GM12878 (cell line): ENCODE measurements at regions of chr6 and their contacts with region 1.

Region 1: GRCh38 chr6:130282234-130282995 is 59.7 kb upstream of the SAMD3 start:
- DNase-seq: no peak
- ATAC-seq: peak; percentile 96
- H3K4me3 ChIP-seq: no peak overlapping the region
- H3K27ac ChIP-seq: no peak overlapping the region
- H3K4me1 ChIP-seq: no peaks in the 10 kb centered on the region
- H3K27me3 ChIP-seq: no peaks in the 10 kb centered on the region
- CTCF ChIP-seq: peak; percentile 43 to 59 (median 51); a peak in 5 of 6 replicates
- EP300 ChIP-seq: no peak
- POLR2A ChIP-seq: no peak
- RAD21 ChIP-seq: peak; percentile 67

Region 2: GRCh38 chr6:129416337-129416990 is 866.0 kb before region 1 on chr6:
- CTCF ChIA-PET with region 1: no interaction called
- POLR2A ChIA-PET with region 1: no interaction called
- RAD21 ChIA-PET with region 1: no interaction called
- SMC1A ChIA-PET with region 1: no interaction called
- in situ Hi-C with region 1: no loop called
- intact Hi-C with region 1: no loop called
- DNase-seq: no peak
- ATAC-seq: no peak; the same call in 2 of the 3 replicates
- H3K4me3 ChIP-seq: no peak overlapping the region
- H3K27ac ChIP-seq: no peak overlapping the region
- H3K4me1 ChIP-seq: no peaks in the 10 kb centered on the region
- H3K27me3 ChIP-seq: no peaks in the 10 kb centered on the region; a peak in 2 of 4 replicates
- CTCF ChIP-seq: no peak
- EP300 ChIP-seq: no peak
- POLR2A ChIP-seq: no peak
- RAD21 ChIP-seq: no peak

Region 3: DNA sequence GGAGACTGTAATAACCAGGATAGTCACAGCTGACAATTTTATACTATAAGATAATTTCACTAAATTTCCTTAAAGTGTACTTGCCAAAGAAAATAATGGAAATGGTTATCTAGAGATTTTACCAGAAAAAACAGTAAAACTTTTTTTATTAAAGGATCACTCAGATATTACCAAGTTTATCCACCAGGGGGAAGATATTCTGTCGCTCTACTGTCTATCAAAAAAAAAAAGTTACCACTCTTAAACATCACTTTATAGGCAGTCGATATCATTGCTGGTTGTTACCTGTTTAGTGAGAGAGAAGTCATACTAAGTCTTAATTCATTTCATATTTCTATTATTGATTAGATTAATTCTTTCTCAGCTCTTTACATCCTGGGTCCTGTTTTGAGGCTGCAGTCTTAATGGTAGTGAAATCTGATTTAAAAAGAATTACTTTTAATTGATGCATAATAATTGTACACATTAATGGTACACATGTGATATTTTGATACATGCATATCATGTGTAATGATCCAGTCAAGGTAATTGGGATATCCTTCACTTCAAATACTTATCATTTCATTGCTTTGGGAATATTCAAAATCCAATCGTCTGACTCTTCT is 245.1 kb before region 1 on chr6:
- CTCF ChIA-PET with region 1: interaction called, 4 read pairs
- POLR2A ChIA-PET with region 1: no interaction called
- RAD21 ChIA-PET with region 1: interaction called, 3 read pairs
- SMC1A ChIA-PET with region 1: interaction called, 3 read pairs
- in situ Hi-C with region 1: no loop called
- intact Hi-C with region 1: loop called (anchors 5 kb)
- DNase-seq: no peak
- ATAC-seq: peak; percentile 61
- H3K4me3 ChIP-seq: no peak overlapping the region
- H3K27ac ChIP-seq: no peak overlapping the region
- H3K4me1 ChIP-seq: peaks cover 3% of the 10 kb centered on the region
- H3K27me3 ChIP-seq: no peaks in the 10 kb centered on the region
- CTCF ChIP-seq: peak in 2 of 3 experiments; percentile 31 to 39; a peak in 4 of 6 replicates
- EP300 ChIP-seq: no peak
- POLR2A ChIP-seq: no peak
- RAD21 ChIP-seq: no peak

Region 4: GRCh38 chr6:130076512-130076911 is 205.9 kb before region 1 on chr6:
- CTCF ChIA-PET with region 1: interaction called, 26 read pairs
- POLR2A ChIA-PET with region 1: no interaction called
- RAD21 ChIA-PET with region 1: interaction called, 8 read pairs
- SMC1A ChIA-PET with region 1: interaction called, 15 read pairs
- in situ Hi-C with region 1: no loop called
- intact Hi-C with region 1: loop called (anchors 1 kb)
- DNase-seq: no peak
- ATAC-seq: no peak; the same call in 2 of the 3 replicates
- H3K4me3 ChIP-seq: no peak overlapping the region
- H3K27ac ChIP-seq: no peak overlapping the region
- H3K4me1 ChIP-seq: no peaks in the 10 kb centered on the region
- H3K27me3 ChIP-seq: no peaks in the 10 kb centered on the region
- CTCF ChIP-seq: peak in 2 of 3 experiments; percentile 4 to 38; a peak in 1 of 6 replicates
- EP300 ChIP-seq: no peak
- POLR2A ChIP-seq: no peak
- RAD21 ChIP-seq: peak; percentile 64

Region 5: DNA sequence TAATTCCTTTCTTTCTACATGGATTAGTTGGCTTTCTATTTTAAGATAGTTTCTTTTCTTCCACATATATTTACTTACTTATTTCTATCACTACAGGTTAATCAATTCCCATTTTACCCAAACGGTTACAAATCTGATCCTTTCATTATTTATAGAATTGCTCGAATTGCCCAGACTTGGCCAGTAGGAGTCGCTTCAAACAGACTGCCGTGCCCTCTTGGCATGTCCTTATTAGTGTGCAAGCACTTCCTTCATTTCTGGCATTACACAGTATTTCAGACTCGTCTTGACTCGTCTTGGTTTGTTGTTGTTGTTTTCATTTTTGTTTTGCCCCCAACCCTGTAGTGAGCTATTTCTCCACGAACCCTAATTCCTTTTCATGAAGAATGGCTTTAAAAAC is 134.2 kb before region 1 on chr6:
- CTCF ChIA-PET with region 1: interaction called, 13 read pairs
- POLR2A ChIA-PET with region 1: no interaction called
- RAD21 ChIA-PET with region 1: no interaction called
- SMC1A ChIA-PET with region 1: interaction called, 3 read pairs
- in situ Hi-C with region 1: no loop called
- intact Hi-C with region 1: no loop called
- DNase-seq: no peak
- ATAC-seq: peak; percentile 91
- H3K4me3 ChIP-seq: no peak overlapping the region
- H3K27ac ChIP-seq: no peak overlapping the region
- H3K4me1 ChIP-seq: no peaks in the 10 kb centered on the region
- H3K27me3 ChIP-seq: no peaks in the 10 kb centered on the region
- CTCF ChIP-seq: peak; percentile 25 to 52 (median 46)
- EP300 ChIP-seq: no peak
- POLR2A ChIP-seq: no peak
- RAD21 ChIP-seq: 0 out of 2 replicates have a peak, but pooled peaks have one; percentile 17

Region 6: GRCh38 chr6:130240232-130240631 is 42.2 kb before region 1 on chr6:
- CTCF ChIA-PET with region 1: interaction called, 10 read pairs
- POLR2A ChIA-PET with region 1: no interaction called
- RAD21 ChIA-PET with region 1: no interaction called
- SMC1A ChIA-PET with region 1: interaction called, 5 read pairs
- in situ Hi-C with region 1: no loop called
- intact Hi-C with region 1: loop called (anchors 2 kb)
- DNase-seq: no peak
- ATAC-seq: no peak
- H3K4me3 ChIP-seq: no peak overlapping the region
- H3K27ac ChIP-seq: no peak overlapping the region
- H3K4me1 ChIP-seq: no peaks in the 10 kb centered on the region
- H3K27me3 ChIP-seq: no peaks in the 10 kb centered on the region
- CTCF ChIP-seq: no peak
- EP300 ChIP-seq: no peak
- POLR2A ChIP-seq: no peak
- RAD21 ChIP-seq: no peak

Region 7: GRCh38 chr6:130293800-130294199 is 11.4 kb after region 1 on chr6:
- CTCF ChIA-PET with region 1: interaction called, 9 read pairs
- POLR2A ChIA-PET with region 1: interaction called, 4 read pairs
- RAD21 ChIA-PET with region 1: interaction called, 5 read pairs
- SMC1A ChIA-PET with region 1: interaction called, 11 read pairs
- in situ Hi-C with region 1: no loop called
- intact Hi-C with region 1: no loop called
- DNase-seq: peak; percentile 8
- ATAC-seq: peak; percentile 98
- H3K4me3 ChIP-seq: no peak overlapping the region
- H3K27ac ChIP-seq: no peak overlapping the region
- H3K4me1 ChIP-seq: no peaks in the 10 kb centered on the region
- H3K27me3 ChIP-seq: no peaks in the 10 kb centered on the region
- CTCF ChIP-seq: peak; percentile 47 to 65 (median 64)
- EP300 ChIP-seq: no peak
- POLR2A ChIP-seq: no peak
- RAD21 ChIP-seq: peak; percentile 61